A549 (cell line): ENCODE measurements at regions of chr18 and their contacts with region 1.

Region 1: GRCh38 chr18:7177116-7177744 is 53.7 kb upstream of the LRRC30 start:
- DNase-seq: peak; percentile 43 to 54
- ATAC-seq: peak; percentile 81 to 91; a peak in 5 of 6 replicates
- H3K4me3 ChIP-seq: no peak overlapping the region
- H3K27ac ChIP-seq: no peak overlapping the region
- H3K4me1 ChIP-seq: no peaks in the 10 kb centered on the region
- CTCF ChIP-seq: peak; percentile 56
- EP300 ChIP-seq: no peak
- POLR2A ChIP-seq: no peak
- RAD21 ChIP-seq: peak; percentile 64 to 78

Region 2: DNA sequence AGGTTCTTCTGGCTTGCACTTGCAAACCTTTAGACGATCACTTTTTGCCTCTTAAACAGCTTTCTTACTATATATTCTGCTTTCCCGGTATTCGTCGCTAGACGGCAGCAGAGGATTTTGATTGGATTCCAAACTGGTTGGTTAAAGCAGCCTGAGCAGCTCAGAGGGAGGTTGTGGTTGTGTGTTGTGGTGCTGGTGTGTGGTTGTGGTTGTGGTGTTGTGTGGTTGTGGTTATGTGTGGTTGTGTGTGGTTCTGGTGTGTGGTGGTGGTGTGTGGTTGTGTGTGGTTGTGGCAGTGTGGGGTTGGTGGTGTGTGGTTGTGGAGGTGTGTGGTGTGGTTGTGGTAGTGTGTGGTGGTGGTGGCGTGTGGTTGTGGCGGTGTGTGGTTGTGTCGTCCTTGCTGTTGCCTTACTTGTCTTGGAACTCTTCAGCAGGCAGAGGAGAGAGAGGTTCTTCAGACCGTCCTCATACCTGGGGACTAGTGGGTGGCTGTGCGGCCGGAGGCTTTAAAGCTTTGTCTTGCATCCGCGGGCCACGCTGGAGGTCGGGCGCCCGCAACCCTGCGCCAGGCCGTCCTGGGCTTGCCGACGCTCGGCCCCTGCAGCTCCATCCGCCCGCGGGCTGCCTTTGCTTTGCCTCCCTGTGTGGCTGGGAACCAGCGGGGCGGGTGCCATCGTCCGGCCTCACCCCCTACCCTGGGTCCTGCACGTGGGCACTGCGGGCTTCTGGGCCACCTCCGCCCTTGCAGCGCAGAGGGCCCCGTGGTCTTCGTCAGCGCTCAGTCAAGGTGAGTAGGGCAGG is 256.9 kb before region 1 on chr18:
- CTCF ChIA-PET with region 1: interaction called, 36 read pairs
- POLR2A ChIA-PET with region 1: no interaction called
- DNase-seq: peak; percentile 13 to 63
- ATAC-seq: peak; percentile 64 to 74; a peak in 5 of 6 replicates
- H3K4me3 ChIP-seq: no peak overlapping the region
- H3K27ac ChIP-seq: no peak overlapping the region
- H3K4me1 ChIP-seq: no peaks in the 10 kb centered on the region
- CTCF ChIP-seq: peak; percentile 73
- EP300 ChIP-seq: no peak
- POLR2A ChIP-seq: no peak
- RAD21 ChIP-seq: peak; percentile 80 to 82

Region 3: GRCh38 chr18:7038330-7038851 is 138.8 kb before region 1 on chr18:
- CTCF ChIA-PET with region 1: interaction called, 11 read pairs
- POLR2A ChIA-PET with region 1: no interaction called
- DNase-seq: peak in 1 of 2 experiments; percentile 24
- ATAC-seq: peak; percentile 50 to 81; a peak in 3 of 6 replicates
- H3K4me3 ChIP-seq: no peak overlapping the region
- H3K27ac ChIP-seq: no peak overlapping the region
- H3K4me1 ChIP-seq: no peaks in the 10 kb centered on the region
- CTCF ChIP-seq: no peak
- EP300 ChIP-seq: no peak
- POLR2A ChIP-seq: no peak
- RAD21 ChIP-seq: peak in 1 of 2 experiments; percentile 42; a peak in 2 of 5 replicates

Region 4: GRCh38 chr18:7164323-7165004 is 12.8 kb before region 1 on chr18:
- CTCF ChIA-PET with region 1: interaction called, 17 read pairs
- POLR2A ChIA-PET with region 1: no interaction called
- DNase-seq: peak; percentile 6 to 26
- ATAC-seq: peak; percentile 75 to 78; a peak in 5 of 6 replicates
- H3K4me3 ChIP-seq: no peak overlapping the region
- H3K27ac ChIP-seq: no peak overlapping the region
- H3K4me1 ChIP-seq: no peaks in the 10 kb centered on the region
- CTCF ChIP-seq: no peak; the same call in 2 of the 3 replicates
- EP300 ChIP-seq: no peak
- POLR2A ChIP-seq: no peak
- RAD21 ChIP-seq: peak; percentile 20 to 48; a peak in 2 of 5 replicates

Region 5: GRCh38 chr18:7207366-7207915 is 30.2 kb after region 1 on chr18:
- CTCF ChIA-PET with region 1: no interaction called
- POLR2A ChIA-PET with region 1: no interaction called
- DNase-seq: no peak
- ATAC-seq: no peak
- H3K4me3 ChIP-seq: no peak overlapping the region
- H3K27ac ChIP-seq: no peak overlapping the region
- H3K4me1 ChIP-seq: no peaks in the 10 kb centered on the region
- CTCF ChIP-seq: no peak
- EP300 ChIP-seq: no peak
- POLR2A ChIP-seq: no peak
- RAD21 ChIP-seq: no peak

Region 6: GRCh38 chr18:7329016-7329415 is 151.8 kb after region 1 on chr18:
- CTCF ChIA-PET with region 1: no interaction called
- POLR2A ChIA-PET with region 1: no interaction called
- DNase-seq: peak in 1 of 2 experiments; percentile 1
- ATAC-seq: peak in 1 of 2 experiments; percentile 66; a peak in 2 of 6 replicates
- H3K4me3 ChIP-seq: no peak overlapping the region
- H3K27ac ChIP-seq: no peak overlapping the region
- H3K4me1 ChIP-seq: 0 out of 3 replicates have a peak, but pooled peaks cover 3% of the 10 kb centered on the region
- CTCF ChIP-seq: no peak
- EP300 ChIP-seq: no peak
- POLR2A ChIP-seq: no peak
- RAD21 ChIP-seq: no peak